ENCODE measurements at regions of chr15 and their contacts with region 1.

Region 1: DNA sequence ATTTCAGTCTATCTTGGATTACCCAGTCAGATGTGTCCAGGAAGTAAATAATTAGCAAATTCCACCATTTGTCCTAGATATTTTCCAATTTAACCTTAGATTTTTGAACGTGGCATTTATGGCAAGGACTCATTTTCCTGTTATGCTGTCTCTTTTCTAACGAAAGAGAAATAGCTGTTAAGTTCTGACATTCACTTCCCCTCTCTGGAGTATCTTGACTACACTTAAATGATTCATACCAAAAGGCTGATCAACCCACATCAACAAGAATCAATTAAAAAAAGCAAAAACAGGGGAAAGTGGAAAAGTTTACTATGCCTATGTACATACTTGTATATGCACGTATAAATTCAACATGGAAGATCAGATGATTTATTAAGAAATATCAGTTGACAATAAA is 149.9 kb downstream of the FRMD5 start:
- DNase-seq: no peak
- ATAC-seq: no peak

Region 2: GRCh38 chr15:44102675-44103254 is 57.5 kb after region 1 on chr15:
- intact Hi-C with region 1: loop called (anchors 10 kb)
- DNase-seq: no peak
- ATAC-seq: peak; percentile 79

Measured in Right ventricle myocardium inferior (tissue), 1 donor.